HepG2 (cell line): ENCODE measurements at regions of chr5 and their contacts with region 1.

Region 1: GRCh38 chr5:134225618-134226440 is at the start of gene PPP2CA:
- DNase-seq: peak; percentile 95
- ATAC-seq: peak; percentile 90
- H3K4me3 ChIP-seq: peak within 1 kb of the TSS; percentile 88 to 98 (median 93)
- H3K27ac ChIP-seq: peak within 1 kb of the TSS; percentile 97
- H3K4me1 ChIP-seq: peaks cover 50% of the 10 kb centered on the region
- H3K27me3 ChIP-seq: no peaks in the 10 kb centered on the region; a peak in 1 of 5 replicates
- CTCF ChIP-seq: no peak; the same call in 1 of the 2 replicates
- EP300 ChIP-seq: no peak
- POLR2A ChIP-seq: peak in 1 of 2 experiments; percentile 60; a peak in 2 of 4 replicates
- RAD21 ChIP-seq: peak; percentile 57
- total RNA-seq, gene PPP2CA: 171 and 233 TPM in 2 replicates

Region 2: GRCh38 chr5:134176511-134177368 is 49.1 kb before region 1 on chr5 and contains the start of gene SKP1:
- CTCF ChIA-PET with region 1: no interaction called
- POLR2A ChIA-PET with region 1: interaction called, 46 read pairs
- in situ Hi-C with region 1: loop called (anchors 5 kb)
- intact Hi-C with region 1: loop called (anchors 5 kb)
- DNase-seq: peak; percentile 68
- ATAC-seq: peak; percentile 78
- H3K4me3 ChIP-seq: peak within 1 kb of the TSS; percentile 95 to 97 (median 97)
- H3K27ac ChIP-seq: peak within 1 kb of the TSS; percentile 98
- H3K4me1 ChIP-seq: peaks cover 45% of the 10 kb centered on the region
- H3K27me3 ChIP-seq: no peaks in the 10 kb centered on the region
- CTCF ChIP-seq: peak; percentile 33
- EP300 ChIP-seq: no peak
- POLR2A ChIP-seq: peak; percentile 94 to 99
- RAD21 ChIP-seq: no peak
- total RNA-seq, gene SKP1: 340 and 507 TPM in 2 replicates

Region 3: GRCh38 chr5:134240421-134240962 is 14.7 kb after region 1 on chr5:
- CTCF ChIA-PET with region 1: no interaction called
- POLR2A ChIA-PET with region 1: interaction called, 59 read pairs
- in situ Hi-C with region 1: no loop called
- intact Hi-C with region 1: loop called (anchors 2 kb)
- DNase-seq: peak; percentile 44
- ATAC-seq: peak; percentile 65
- H3K4me3 ChIP-seq: peak overlapping the region in 2 of 3 experiments; percentile 37 to 38; a peak in 2 of 6 replicates
- H3K27ac ChIP-seq: no peak overlapping the region
- H3K4me1 ChIP-seq: peaks cover 44% of the 10 kb centered on the region
- H3K27me3 ChIP-seq: no peaks in the 10 kb centered on the region
- CTCF ChIP-seq: no peak
- EP300 ChIP-seq: no peak
- POLR2A ChIP-seq: no peak
- RAD21 ChIP-seq: no peak

Region 4: DNA sequence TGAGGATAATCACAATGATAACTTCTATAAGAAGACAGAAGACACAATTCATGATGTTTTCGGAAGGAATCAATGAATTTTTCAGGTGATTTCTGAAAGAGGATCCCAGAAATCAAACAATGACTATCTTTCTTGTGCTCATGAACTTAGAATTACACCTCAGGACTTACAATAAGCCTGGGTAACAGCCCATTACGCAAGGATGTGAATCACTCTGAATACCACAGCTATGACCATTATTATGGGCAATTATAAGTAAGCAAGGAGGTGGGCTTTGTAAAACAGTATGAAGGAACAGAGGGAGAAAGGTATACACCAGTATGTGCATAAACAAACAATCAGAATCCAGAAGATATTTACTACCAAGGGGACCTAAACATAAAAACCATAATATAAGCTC is 21.6 kb after region 1 on chr5:
- CTCF ChIA-PET with region 1: no interaction called
- POLR2A ChIA-PET with region 1: interaction called, 59 read pairs
- in situ Hi-C with region 1: no loop called
- intact Hi-C with region 1: no loop called
- DNase-seq: peak; percentile 69
- ATAC-seq: no peak
- H3K4me3 ChIP-seq: no peak overlapping the region
- H3K27ac ChIP-seq: no peak overlapping the region
- H3K4me1 ChIP-seq: peaks cover 56% of the 10 kb centered on the region
- H3K27me3 ChIP-seq: no peaks in the 10 kb centered on the region
- CTCF ChIP-seq: no peak
- EP300 ChIP-seq: no peak
- POLR2A ChIP-seq: no peak
- RAD21 ChIP-seq: no peak

Region 5: GRCh38 chr5:134289509-134290113 is 63.8 kb after region 1 on chr5:
- CTCF ChIA-PET with region 1: interaction called, 9 read pairs
- POLR2A ChIA-PET with region 1: interaction called, 3 read pairs
- in situ Hi-C with region 1: loop called (anchors 5 kb)
- intact Hi-C with region 1: loop called (anchors 1 kb)
- DNase-seq: peak; percentile 84
- ATAC-seq: peak; percentile 99
- H3K4me3 ChIP-seq: no peak overlapping the region
- H3K27ac ChIP-seq: no peak overlapping the region
- H3K4me1 ChIP-seq: no peaks in the 10 kb centered on the region
- H3K27me3 ChIP-seq: no peaks in the 10 kb centered on the region
- CTCF ChIP-seq: peak; percentile 89
- EP300 ChIP-seq: no peak
- POLR2A ChIP-seq: no peak
- RAD21 ChIP-seq: peak; percentile 95